ENCODE measurements at regions of chr10 and their contacts with region 1.

Region 1: DNA sequence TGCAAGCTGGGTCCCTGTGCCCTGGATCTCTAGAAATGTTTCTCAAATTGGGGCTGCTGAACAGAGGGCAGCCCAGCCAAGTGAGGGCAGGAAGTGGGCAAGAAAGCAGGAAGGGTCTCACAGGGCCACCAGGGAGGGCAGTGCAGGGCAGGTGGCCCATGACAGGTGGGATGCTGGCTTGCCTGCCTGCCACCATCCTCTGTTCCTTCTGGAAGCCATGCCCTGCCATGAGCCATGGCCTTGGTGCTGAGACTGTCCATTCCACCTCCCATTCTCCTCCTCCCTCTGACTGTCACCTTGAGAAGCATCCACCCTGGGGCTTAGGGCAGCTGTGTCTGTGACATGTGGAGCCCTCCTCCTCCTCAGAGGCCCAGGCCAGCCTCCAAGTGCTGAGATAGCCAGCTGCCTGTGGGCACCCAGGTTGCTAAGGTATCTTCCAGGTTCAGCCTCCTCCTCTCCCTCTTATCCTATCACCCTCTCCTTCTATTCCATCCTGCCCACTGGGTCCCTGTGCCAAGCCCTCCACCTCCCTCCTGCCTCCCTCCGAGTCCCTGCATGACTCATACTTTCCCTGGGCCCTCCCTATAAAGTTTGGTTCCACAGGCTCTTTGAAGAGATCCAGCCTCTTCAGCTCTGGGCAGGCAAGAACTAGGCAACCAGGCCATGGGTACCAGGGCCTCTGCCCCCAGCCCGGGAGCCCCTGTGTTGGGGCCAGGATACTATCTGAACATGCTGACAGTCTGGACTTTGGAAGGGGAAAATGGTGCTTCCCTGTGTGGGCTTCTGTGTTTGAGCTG is 1.3 kb downstream of the VSIR start:
- DNase-seq: peak in 2 of 9 donors; percentile 61 to 62
- ATAC-seq: no peak
- H3K4me3 ChIP-seq: peak overlapping the region; percentile 91
- H3K4me3 Mint-ChIP-seq: peak overlapping the region; percentile 86 to 98 (median 95)
- H3K27ac ChIP-seq: peak overlapping the region; percentile 93
- H3K27ac Mint-ChIP-seq: peak overlapping the region; percentile 80 to 98 (median 93)
- H3K4me1 ChIP-seq: peaks cover 70 to 71% of the 10 kb centered on the region in 2 donors
- H3K4me1 Mint-ChIP-seq: peaks cover 59 to 84% (median 79%) of the 10 kb centered on the region in 7 donors
- H3K27me3 ChIP-seq: no peaks in the 10 kb centered on the region
- H3K27me3 Mint-ChIP-seq: no peaks in the 10 kb centered on the region

Region 2: GRCh38 chr10:71319042-71319799 is 452.8 kb before region 1 on chr10 and contains the start of gene SLC29A3:
- CTCF ChIA-PET with region 1: interaction called, 11 read pairs
- POLR2A ChIA-PET with region 1: no interaction called
- intact Hi-C with region 1: loop called (anchors 1 kb)
- DNase-seq: peak; percentile 45 to 85 (median 70)
- ATAC-seq: peak; percentile 91
- H3K4me3 ChIP-seq: peak within 1 kb of the TSS; percentile 81
- H3K4me3 Mint-ChIP-seq: peak within 1 kb of the TSS; percentile 85 to 97 (median 94)
- H3K27ac ChIP-seq: peak within 1 kb of the TSS; percentile 62
- H3K27ac Mint-ChIP-seq: peak within 1 kb of the TSS; percentile 71 to 94 (median 85)
- H3K4me1 ChIP-seq: peaks cover 5 to 10% of the 10 kb centered on the region in 2 donors
- H3K4me1 Mint-ChIP-seq: peaks cover 27 to 53% (median 40%) of the 10 kb centered on the region in 7 donors
- H3K27me3 ChIP-seq: no peaks in the 10 kb centered on the region
- H3K27me3 Mint-ChIP-seq: no peaks in the 10 kb centered on the region
- total RNA-seq, gene SLC29A3: 3.5 to 7.2 (median 5.1) TPM

Region 3: GRCh38 chr10:71708301-71708703 is 63.7 kb before region 1 on chr10:
- CTCF ChIA-PET with region 1: interaction called, 38 read pairs
- POLR2A ChIA-PET with region 1: interaction called, 54 read pairs
- intact Hi-C with region 1: loop called (anchors 1 kb)
- DNase-seq: peak; percentile 48 to 75 (median 59)
- ATAC-seq: peak; percentile 82
- H3K4me3 ChIP-seq: no peak overlapping the region
- H3K4me3 Mint-ChIP-seq: peak overlapping the region in 1 of 10 donors; percentile 27
- H3K27ac ChIP-seq: no peak overlapping the region
- H3K27ac Mint-ChIP-seq: peak overlapping the region in 2 of 9 donors; percentile 13 to 79
- H3K4me1 ChIP-seq: peaks cover 23 to 27% of the 10 kb centered on the region in 2 donors
- H3K4me1 Mint-ChIP-seq: peaks cover 21 to 61% (median 47%) of the 10 kb centered on the region in 7 donors
- H3K27me3 ChIP-seq: no peaks in the 10 kb centered on the region
- H3K27me3 Mint-ChIP-seq: no peaks in the 10 kb centered on the region

Region 4: DNA sequence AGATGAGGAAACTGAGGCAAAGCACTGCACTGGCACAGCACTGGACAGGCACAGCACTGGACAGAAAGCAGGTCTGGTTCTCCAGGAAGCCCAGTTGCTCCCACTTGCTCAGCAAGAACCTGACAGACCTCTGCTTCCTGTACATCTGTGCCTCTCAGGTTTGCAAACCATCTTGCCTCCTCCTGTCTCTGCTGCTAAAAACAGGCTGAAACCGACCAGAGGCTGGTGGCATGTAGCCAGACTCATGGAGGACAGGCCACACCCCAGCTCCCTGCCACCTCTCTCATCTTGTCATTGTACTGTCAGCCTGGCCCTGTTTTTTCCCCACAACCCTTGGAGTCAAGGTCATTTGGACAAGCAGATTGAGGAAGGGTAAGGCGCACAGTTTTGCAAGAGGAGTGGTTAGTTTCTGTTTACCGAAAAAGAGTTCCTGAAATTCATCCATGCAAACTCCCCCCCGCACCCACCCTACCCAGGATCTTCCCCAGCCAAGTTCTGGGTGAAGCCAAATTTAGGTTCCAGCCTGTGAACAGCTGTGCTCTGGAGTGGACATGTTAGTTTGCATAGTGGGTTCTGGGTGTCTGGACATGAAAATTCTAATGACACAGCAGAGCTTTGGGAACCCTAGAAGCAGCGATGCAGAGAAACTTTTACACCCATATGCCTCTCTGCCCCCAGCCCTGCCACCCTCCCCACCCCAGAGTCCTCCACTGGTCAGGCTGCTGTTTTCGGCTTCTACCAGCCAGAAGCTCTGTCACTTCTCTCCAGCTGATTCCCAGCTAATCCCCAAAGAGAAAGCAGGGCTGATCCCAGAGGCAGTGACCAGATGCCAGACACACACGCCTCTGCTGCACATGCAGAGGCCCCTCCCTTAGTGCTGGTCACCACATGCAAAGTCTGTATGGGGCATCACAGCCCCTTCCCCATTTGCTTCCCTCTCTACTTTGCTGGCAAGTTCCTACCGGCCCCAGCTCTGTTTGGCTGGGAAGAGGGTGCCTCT is 44.0 kb before region 1 on chr10:
- CTCF ChIA-PET with region 1: interaction called, 48 read pairs
- POLR2A ChIA-PET with region 1: interaction called, 136 read pairs
- intact Hi-C with region 1: loop called (anchors 1 kb)
- DNase-seq: peak; percentile 34 to 91 (median 82)
- ATAC-seq: peak; percentile 78
- H3K4me3 ChIP-seq: peak overlapping the region; percentile 2
- H3K4me3 Mint-ChIP-seq: peak overlapping the region; percentile 61 to 86 (median 78)
- H3K27ac ChIP-seq: peak overlapping the region; percentile 79
- H3K27ac Mint-ChIP-seq: peak overlapping the region; percentile 96 to 99 (median 97)
- H3K4me1 ChIP-seq: peaks cover 75 to 83% of the 10 kb centered on the region in 2 donors
- H3K4me1 Mint-ChIP-seq: peaks cover 54 to 97% (median 72%) of the 10 kb centered on the region in 7 donors
- H3K27me3 ChIP-seq: no peaks in the 10 kb centered on the region
- H3K27me3 Mint-ChIP-seq: no peaks in the 10 kb centered on the region

Region 5: DNA sequence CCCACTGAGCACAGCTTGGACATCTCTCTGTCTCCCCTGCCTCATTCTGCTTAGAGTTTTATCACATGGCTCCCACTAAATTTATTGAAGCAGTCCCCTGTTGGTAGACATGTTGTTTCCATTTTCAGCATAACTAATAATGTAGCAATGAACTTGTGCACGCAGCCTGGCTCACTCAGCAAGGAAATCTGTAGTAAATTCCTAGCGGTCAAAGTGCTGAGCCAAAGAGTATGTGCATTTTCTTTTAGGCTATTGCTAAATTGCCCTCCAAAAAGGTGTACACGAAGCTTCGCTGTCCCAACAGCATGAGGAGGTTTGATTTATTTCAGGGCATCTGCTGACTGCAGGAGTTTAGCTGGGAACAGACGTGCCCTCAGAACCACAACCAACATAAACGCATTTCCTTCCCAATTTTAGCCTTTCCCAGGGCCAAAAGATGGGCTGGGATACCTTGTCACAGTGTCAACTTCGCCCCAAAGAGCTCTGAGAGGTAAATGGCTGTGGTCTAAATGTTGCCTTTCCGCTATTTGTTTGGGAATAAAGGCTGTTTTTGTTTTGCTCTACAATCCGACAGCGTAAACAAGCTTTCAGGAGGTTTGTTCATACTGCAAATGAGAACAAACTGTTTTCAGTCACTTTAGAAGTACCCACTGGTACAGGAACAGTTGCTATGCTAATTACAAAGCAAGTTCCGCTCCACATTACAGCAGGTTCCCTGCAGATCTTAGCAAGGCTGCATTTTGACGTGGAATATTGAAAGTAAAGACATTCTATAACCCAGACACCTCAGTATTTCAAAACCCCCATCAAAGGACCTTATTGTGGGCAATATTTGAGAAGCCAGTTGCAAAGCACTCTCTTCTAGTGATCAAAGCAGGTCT is 15.5 kb before region 1 on chr10:
- CTCF ChIA-PET with region 1: interaction called, 32 read pairs
- POLR2A ChIA-PET with region 1: interaction called, 863 read pairs
- intact Hi-C with region 1: loop called (anchors 1 kb)
- DNase-seq: peak in 7 of 9 donors; percentile 58 to 85 (median 74)
- ATAC-seq: peak; percentile 79
- H3K4me3 ChIP-seq: peak overlapping the region; percentile 21
- H3K4me3 Mint-ChIP-seq: peak overlapping the region; percentile 68 to 90 (median 80)
- H3K27ac ChIP-seq: peak overlapping the region; percentile 74
- H3K27ac Mint-ChIP-seq: peak overlapping the region; percentile 91 to 99 (median 97)
- H3K4me1 ChIP-seq: peaks cover 81 to 87% of the 10 kb centered on the region in 2 donors
- H3K4me1 Mint-ChIP-seq: peaks cover 71 to 94% (median 85%) of the 10 kb centered on the region in 7 donors
- H3K27me3 ChIP-seq: no peaks in the 10 kb centered on the region
- H3K27me3 Mint-ChIP-seq: no peaks in the 10 kb centered on the region

Region 6: GRCh38 chr10:71835671-71836595 is 63.9 kb after region 1 on chr10:
- CTCF ChIA-PET with region 1: no interaction called
- POLR2A ChIA-PET with region 1: no interaction called
- intact Hi-C with region 1: no loop called
- DNase-seq: no peak
- ATAC-seq: peak; percentile 70
- H3K4me3 ChIP-seq: no peak overlapping the region
- H3K4me3 Mint-ChIP-seq: no peak overlapping the region
- H3K27ac ChIP-seq: no peak overlapping the region
- H3K27ac Mint-ChIP-seq: peak overlapping the region in 5 of 9 donors; percentile 22 to 78 (median 32)
- H3K4me1 ChIP-seq: peaks cover 5 to 12% of the 10 kb centered on the region in 2 donors
- H3K4me1 Mint-ChIP-seq: peaks cover 41 to 72% (median 56%) of the 10 kb centered on the region in 7 donors
- H3K27me3 ChIP-seq: no peaks in the 10 kb centered on the region
- H3K27me3 Mint-ChIP-seq: no peaks in the 10 kb centered on the region